ENCODE measurements at regions of chr22 and their contacts with region 1.

Region 1: GRCh38 chr22:37643225-37643847 is 3.9 kb downstream of the SH3BP1 start:
- DNase-seq: peak; percentile 68 to 87 (median 82)
- H3K4me3 ChIP-seq: peak overlapping the region; percentile 14
- H3K4me3 Mint-ChIP-seq: peak overlapping the region; percentile 37 to 85 (median 68)
- H3K27ac ChIP-seq: no peak overlapping the region
- H3K27ac Mint-ChIP-seq: peak overlapping the region; percentile 62 to 88 (median 84)
- H3K4me1 ChIP-seq: peaks cover 37% of the 10 kb centered on the region
- H3K4me1 Mint-ChIP-seq: peaks cover 27 to 59% (median 33%) of the 10 kb centered on the region in 3 donors
- H3K27me3 ChIP-seq: no peaks in the 10 kb centered on the region
- H3K27me3 Mint-ChIP-seq: no peaks in the 10 kb centered on the region

Region 2: DNA sequence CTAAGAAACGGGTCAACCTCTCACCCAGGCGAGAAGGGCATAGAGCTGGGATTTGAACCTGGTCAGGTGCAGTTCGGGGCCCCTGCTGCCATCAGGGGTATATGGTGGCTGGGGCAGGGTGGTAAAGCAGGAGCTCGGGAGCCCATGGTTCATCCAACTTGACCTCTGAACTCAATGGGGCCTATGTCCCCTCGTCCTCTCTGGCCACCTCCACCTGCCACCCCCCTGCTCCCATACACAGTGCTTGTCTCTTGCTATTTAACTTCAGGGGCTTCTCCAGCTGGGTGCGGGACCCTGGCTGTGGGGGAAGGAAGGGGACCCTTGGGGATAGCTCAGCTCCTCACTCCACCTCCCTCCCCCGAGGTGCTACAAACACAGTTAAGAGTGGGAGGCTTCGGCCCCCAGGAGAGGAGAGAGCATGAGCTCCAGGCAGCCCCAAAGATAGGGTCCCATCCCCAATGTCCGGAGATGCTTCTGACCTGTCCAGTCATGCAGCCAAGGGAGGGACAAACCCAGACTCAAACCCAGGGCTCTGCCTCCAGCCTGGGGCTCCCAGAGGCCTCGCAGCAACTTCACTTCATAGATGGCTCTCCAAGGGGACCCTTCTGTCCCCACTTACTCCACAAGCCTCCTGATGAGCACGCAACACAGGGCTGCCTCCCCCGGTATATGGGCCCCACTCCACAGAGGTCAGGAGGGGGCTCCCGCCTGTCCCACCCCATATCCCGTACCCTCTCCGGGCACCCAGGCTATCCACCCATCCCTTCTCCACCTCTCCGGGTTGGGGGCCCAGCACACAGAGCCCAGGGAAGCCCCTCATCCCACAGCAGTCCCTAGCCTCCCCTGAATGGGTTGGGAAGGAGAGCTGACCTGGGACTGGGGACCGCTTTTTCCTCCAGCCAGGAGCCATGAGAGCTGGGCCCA is 494.3 kb before region 1 on chr22:
- CTCF ChIA-PET with region 1: no interaction called
- POLR2A ChIA-PET with region 1: no interaction called
- DNase-seq: no peak
- H3K4me3 ChIP-seq: peak overlapping the region; percentile 86
- H3K4me3 Mint-ChIP-seq: peak overlapping the region; percentile 88 to 97 (median 96)
- H3K27ac ChIP-seq: peak overlapping the region; percentile 88
- H3K27ac Mint-ChIP-seq: peak overlapping the region; percentile 96 to 100 (median 98)
- H3K4me1 ChIP-seq: peaks cover 67% of the 10 kb centered on the region
- H3K4me1 Mint-ChIP-seq: peaks cover 62 to 70% (median 65%) of the 10 kb centered on the region in 3 donors
- H3K27me3 ChIP-seq: no peaks in the 10 kb centered on the region
- H3K27me3 Mint-ChIP-seq: peaks cover 0 to 4% of the 10 kb centered on the region in 2 donors

Region 3: GRCh38 chr22:37616201-37617083 is 26.9 kb before region 1 on chr22:
- CTCF ChIA-PET with region 1: interaction called, 28 read pairs
- POLR2A ChIA-PET with region 1: no interaction called
- DNase-seq: no peak
- H3K4me3 ChIP-seq: no peak overlapping the region
- H3K4me3 Mint-ChIP-seq: no peak overlapping the region
- H3K27ac ChIP-seq: no peak overlapping the region
- H3K27ac Mint-ChIP-seq: no peak overlapping the region
- H3K4me1 ChIP-seq: peaks cover under 1% of the 10 kb centered on the region
- H3K4me1 Mint-ChIP-seq: peaks cover 0 to 3% (median 0%) of the 10 kb centered on the region in 3 donors
- H3K27me3 ChIP-seq: no peaks in the 10 kb centered on the region
- H3K27me3 Mint-ChIP-seq: no peaks in the 10 kb centered on the region

Region 4: GRCh38 chr22:37623075-37624016 is 20.0 kb before region 1 on chr22:
- CTCF ChIA-PET with region 1: interaction called, 236 read pairs
- POLR2A ChIA-PET with region 1: interaction called, 25 read pairs
- DNase-seq: peak; percentile 69 to 85 (median 70)
- H3K4me3 ChIP-seq: no peak overlapping the region
- H3K4me3 Mint-ChIP-seq: peak overlapping the region in 6 of 7 donors; percentile 35 to 87 (median 63)
- H3K27ac ChIP-seq: no peak overlapping the region
- H3K27ac Mint-ChIP-seq: peak overlapping the region; percentile 90 to 98 (median 96)
- H3K4me1 ChIP-seq: peaks cover 52% of the 10 kb centered on the region
- H3K4me1 Mint-ChIP-seq: peaks cover 33 to 52% (median 37%) of the 10 kb centered on the region in 3 donors
- H3K27me3 ChIP-seq: no peaks in the 10 kb centered on the region
- H3K27me3 Mint-ChIP-seq: no peaks in the 10 kb centered on the region

Region 5: GRCh38 chr22:37669586-37669985 is 26.2 kb after region 1 on chr22:
- CTCF ChIA-PET with region 1: interaction called, 375 read pairs
- POLR2A ChIA-PET with region 1: interaction called, 8 read pairs
- DNase-seq: no peak
- H3K4me3 ChIP-seq: no peak overlapping the region
- H3K4me3 Mint-ChIP-seq: peak overlapping the region in 1 of 7 donors; percentile 40
- H3K27ac ChIP-seq: no peak overlapping the region
- H3K27ac Mint-ChIP-seq: peak overlapping the region in 3 of 8 donors; percentile 54 to 89 (median 74)
- H3K4me1 ChIP-seq: peaks cover 25% of the 10 kb centered on the region
- H3K4me1 Mint-ChIP-seq: peaks cover 16 to 40% (median 17%) of the 10 kb centered on the region in 3 donors
- H3K27me3 ChIP-seq: no peaks in the 10 kb centered on the region
- H3K27me3 Mint-ChIP-seq: no peaks in the 10 kb centered on the region

Region 6: GRCh38 chr22:37676736-37677492 is 33.6 kb after region 1 on chr22:
- CTCF ChIA-PET with region 1: interaction called, 375 read pairs
- POLR2A ChIA-PET with region 1: interaction called, 10 read pairs
- DNase-seq: peak; percentile 88 to 96 (median 91)
- H3K4me3 ChIP-seq: peak overlapping the region; percentile 68
- H3K4me3 Mint-ChIP-seq: peak overlapping the region; percentile 85 to 97 (median 89)
- H3K27ac ChIP-seq: peak overlapping the region; percentile 83
- H3K27ac Mint-ChIP-seq: peak overlapping the region; percentile 93 to 100 (median 99)
- H3K4me1 ChIP-seq: peaks cover 45% of the 10 kb centered on the region
- H3K4me1 Mint-ChIP-seq: peaks cover 44 to 69% (median 45%) of the 10 kb centered on the region in 3 donors
- H3K27me3 ChIP-seq: no peaks in the 10 kb centered on the region
- H3K27me3 Mint-ChIP-seq: no peaks in the 10 kb centered on the region